ENCODE measurements at regions of chr13 and their contacts with region 1.

Region 1: GRCh38 chr13:30802953-30803478 is 67.7 kb downstream of the ALOX5AP start:
- DNase-seq: peak; percentile 91
- ATAC-seq: peak; percentile 99
- H3K4me3 Mint-ChIP-seq: no peak overlapping the region
- H3K27ac Mint-ChIP-seq: no peak overlapping the region
- H3K4me1 Mint-ChIP-seq: peaks cover 4% of the 10 kb centered on the region
- H3K27me3 Mint-ChIP-seq: no peaks in the 10 kb centered on the region

Region 2: DNA sequence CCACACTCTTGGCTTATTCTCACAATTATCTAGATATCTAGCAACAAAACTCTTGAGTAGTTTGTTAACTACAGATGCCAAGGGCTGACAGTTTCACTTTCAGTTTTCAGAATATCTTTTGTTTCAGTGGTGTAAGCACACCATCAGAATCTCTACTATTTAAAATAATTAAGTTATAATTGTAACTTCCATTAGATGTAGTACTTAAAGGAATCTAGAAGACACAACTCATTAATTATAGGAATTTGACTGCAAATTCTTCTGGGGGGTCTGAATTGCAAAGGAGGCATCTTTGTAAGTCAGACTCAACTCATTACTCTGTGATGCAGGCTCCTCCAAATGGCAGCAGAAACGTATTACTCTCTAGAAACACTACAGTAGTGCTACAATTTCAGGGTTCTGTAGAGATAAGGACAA is 230.1 kb before region 1 on chr13:
- CTCF ChIA-PET with region 1: no interaction called
- POLR2A ChIA-PET with region 1: no interaction called
- intact Hi-C with region 1: loop called in 1 of 2 experiments (anchors 5 kb)
- DNase-seq: peak; percentile 27
- ATAC-seq: peak; percentile 54
- H3K4me3 Mint-ChIP-seq: peak overlapping the region; percentile 55
- H3K27ac Mint-ChIP-seq: peak overlapping the region; percentile 72
- H3K4me1 Mint-ChIP-seq: peaks cover 40% of the 10 kb centered on the region
- H3K27me3 Mint-ChIP-seq: no peaks in the 10 kb centered on the region

Region 3: GRCh38 chr13:30581582-30581981 is 221.4 kb before region 1 on chr13:
- CTCF ChIA-PET with region 1: interaction called, 3 read pairs
- POLR2A ChIA-PET with region 1: no interaction called
- intact Hi-C with region 1: loop called (anchors 5 kb)
- DNase-seq: peak; percentile 12
- ATAC-seq: no peak
- H3K4me3 Mint-ChIP-seq: no peak overlapping the region
- H3K27ac Mint-ChIP-seq: no peak overlapping the region
- H3K4me1 Mint-ChIP-seq: peaks cover 16% of the 10 kb centered on the region
- H3K27me3 Mint-ChIP-seq: no peaks in the 10 kb centered on the region

Region 4: GRCh38 chr13:30673669-30674521 is 129.1 kb before region 1 on chr13:
- CTCF ChIA-PET with region 1: interaction called, 3 read pairs
- POLR2A ChIA-PET with region 1: no interaction called
- intact Hi-C with region 1: loop called (anchors 1 to 2 kb)
- DNase-seq: peak; percentile 92
- ATAC-seq: peak; percentile 97
- H3K4me3 Mint-ChIP-seq: peak overlapping the region; percentile 72
- H3K27ac Mint-ChIP-seq: peak overlapping the region; percentile 73
- H3K4me1 Mint-ChIP-seq: peaks cover 12% of the 10 kb centered on the region
- H3K27me3 Mint-ChIP-seq: no peaks in the 10 kb centered on the region

Region 5: DNA sequence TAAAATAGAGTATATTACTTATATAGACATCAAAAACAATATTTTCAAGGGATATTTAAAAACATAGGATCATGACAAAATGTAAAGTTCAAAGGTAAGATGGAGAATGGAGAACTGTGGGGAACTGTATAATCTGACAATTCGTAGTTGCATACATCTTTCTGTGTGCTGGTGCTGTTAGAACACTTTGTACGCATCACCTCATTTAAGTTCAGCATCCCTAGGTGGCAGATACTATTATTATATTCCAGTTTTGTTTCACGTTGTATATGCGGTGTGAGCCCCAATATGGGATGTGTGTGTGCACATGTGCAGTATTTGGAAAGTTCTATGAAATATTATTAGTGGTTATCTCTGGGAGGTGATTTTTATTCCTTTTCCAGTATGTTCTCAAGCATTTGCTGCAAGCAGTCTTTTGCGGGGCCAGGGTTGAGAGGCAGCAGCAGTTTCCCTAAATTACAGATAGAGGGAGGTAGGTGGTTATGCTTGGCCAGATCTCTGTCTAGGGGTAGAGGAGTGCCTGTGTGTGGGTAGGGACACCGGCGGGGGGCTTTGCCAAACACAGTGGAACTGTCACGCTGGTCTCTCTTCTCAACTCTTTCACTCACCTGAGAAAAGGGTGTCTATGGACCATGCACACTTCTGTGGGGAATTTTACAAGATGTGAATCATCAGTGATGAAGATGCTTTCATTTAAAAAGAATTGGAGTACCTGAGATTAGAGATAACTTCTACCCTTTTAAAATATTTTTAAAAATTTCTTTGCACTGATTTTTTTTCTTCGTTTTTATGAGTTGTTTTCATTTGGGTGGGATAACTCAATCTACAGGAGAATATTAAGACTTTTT is 123.3 kb before region 1 on chr13:
- CTCF ChIA-PET with region 1: no interaction called
- POLR2A ChIA-PET with region 1: no interaction called
- intact Hi-C with region 1: loop called (anchors 1 to 2 kb)
- DNase-seq: peak; percentile 56
- ATAC-seq: peak; percentile 94
- H3K4me3 Mint-ChIP-seq: no peak overlapping the region
- H3K27ac Mint-ChIP-seq: no peak overlapping the region
- H3K4me1 Mint-ChIP-seq: peaks cover 6% of the 10 kb centered on the region
- H3K27me3 Mint-ChIP-seq: no peaks in the 10 kb centered on the region

Region 6: GRCh38 chr13:30857018-30857417 is 54.0 kb after region 1 on chr13:
- CTCF ChIA-PET with region 1: no interaction called
- POLR2A ChIA-PET with region 1: no interaction called
- intact Hi-C with region 1: no loop called
- DNase-seq: no peak
- ATAC-seq: no peak
- H3K4me3 Mint-ChIP-seq: no peak overlapping the region
- H3K27ac Mint-ChIP-seq: no peak overlapping the region
- H3K4me1 Mint-ChIP-seq: no peaks in the 10 kb centered on the region
- H3K27me3 Mint-ChIP-seq: peaks cover 1% of the 10 kb centered on the region

Region 7: GRCh38 chr13:30932481-30933353 is 129.7 kb after region 1 on chr13 and contains the start of gene TEX26:
- CTCF ChIA-PET with region 1: no interaction called
- POLR2A ChIA-PET with region 1: no interaction called
- intact Hi-C with region 1: no loop called
- DNase-seq: no peak
- ATAC-seq: no peak
- H3K4me3 Mint-ChIP-seq: no peak within 1 kb of the TSS
- H3K27ac Mint-ChIP-seq: no peak within 1 kb of the TSS
- H3K4me1 Mint-ChIP-seq: no peaks in the 10 kb centered on the region
- H3K27me3 Mint-ChIP-seq: peaks cover 41% of the 10 kb centered on the region
- total RNA-seq, gene TEX26: not detected

Measured in activated CD4-positive, alpha-beta T cell treated with anti-CD3 and anti-CD28 coated beads for 36 hours (primary cell).